K562 (cell line): ENCODE measurements at regions of chr1 and their contacts with region 1.

Region 1: GRCh38 chr1:39238476-39238875 is 34.0 kb downstream of the MACF1 start:
- DNase-seq: no peak
- ATAC-seq: no peak
- H3K4me3 ChIP-seq: no peak overlapping the region
- H3K27ac ChIP-seq: no peak overlapping the region
- H3K4me1 ChIP-seq: peaks cover 0 to under 1% of the 10 kb centered on the region in 2 experiments; a peak in 1 of 5 replicates
- H3K27me3 ChIP-seq: no peaks in the 10 kb centered on the region
- CTCF ChIP-seq: no peak
- EP300 ChIP-seq: no peak
- POLR2A ChIP-seq: no peak
- RAD21 ChIP-seq: no peak

Region 2: DNA sequence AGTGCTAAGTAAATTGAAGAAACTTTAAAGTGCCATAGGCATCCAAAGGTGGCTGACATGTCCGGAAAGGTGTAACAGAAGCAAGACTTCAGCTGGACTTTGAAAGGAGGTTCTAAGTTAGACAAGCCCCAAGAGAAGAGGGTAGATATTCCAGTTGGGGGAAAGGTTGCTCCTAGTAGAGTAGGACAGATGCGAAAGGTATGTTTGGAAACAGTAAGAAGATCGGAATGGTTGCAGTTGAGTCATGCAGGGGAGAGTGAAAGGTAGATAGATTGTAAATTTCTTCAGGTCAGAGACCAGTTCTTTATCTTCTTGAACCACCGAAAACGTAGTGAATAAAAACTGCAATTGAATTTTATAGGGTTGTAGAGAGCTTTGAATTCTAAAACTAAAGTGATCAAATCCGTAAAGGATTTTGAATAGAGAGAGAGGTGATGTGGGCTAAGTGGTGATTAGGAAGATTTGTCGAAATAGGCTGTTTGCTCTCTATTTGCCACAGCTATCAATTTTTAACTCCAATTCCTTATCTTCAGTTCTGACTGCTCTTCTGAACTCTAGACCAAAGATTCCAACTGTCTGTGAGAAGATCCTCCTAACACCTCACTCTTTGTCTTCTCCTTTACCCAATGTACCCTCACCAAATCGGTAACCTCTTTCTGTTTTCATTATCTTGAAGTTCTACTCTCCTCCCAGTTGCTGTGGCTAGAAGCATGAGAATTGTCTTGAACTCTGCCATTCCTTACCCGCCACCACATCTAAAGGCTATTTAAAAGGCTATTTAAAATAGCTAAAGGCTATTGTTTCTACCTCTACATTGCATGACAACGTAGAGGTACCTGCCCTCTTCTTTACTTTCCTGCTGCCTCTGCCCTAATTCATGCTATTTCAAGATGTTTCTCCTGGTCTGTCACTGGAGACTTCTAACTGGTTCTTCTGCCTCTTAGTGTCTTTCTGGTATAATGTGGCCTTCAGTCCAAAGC is 17.3 kb before region 1 on chr1:
- CTCF ChIA-PET with region 1: no interaction called
- POLR2A ChIA-PET with region 1: interaction called, 13 read pairs
- in situ Hi-C with region 1: no loop called
- intact Hi-C with region 1: no loop called
- DNase-seq: no peak
- ATAC-seq: no peak
- H3K4me3 ChIP-seq: no peak overlapping the region
- H3K27ac ChIP-seq: no peak overlapping the region
- H3K4me1 ChIP-seq: peaks cover 10 to 28% of the 10 kb centered on the region in 2 experiments
- H3K27me3 ChIP-seq: no peaks in the 10 kb centered on the region
- CTCF ChIP-seq: no peak
- EP300 ChIP-seq: no peak
- POLR2A ChIP-seq: no peak
- RAD21 ChIP-seq: no peak